Panc1 (cell line): ENCODE measurements at regions of chr20 and their contacts with region 1.

Region 1: GRCh38 chr20:43579861-43580793 is 10.6 kb upstream of the IFT52 start:
- DNase-seq: no peak
- ATAC-seq: no peak
- H3K4me3 ChIP-seq: no peak overlapping the region
- H3K27ac ChIP-seq: no peak overlapping the region
- H3K4me1 ChIP-seq: no peaks in the 10 kb centered on the region
- H3K27me3 ChIP-seq: no peaks in the 10 kb centered on the region
- CTCF ChIP-seq: no peak

Region 2: DNA sequence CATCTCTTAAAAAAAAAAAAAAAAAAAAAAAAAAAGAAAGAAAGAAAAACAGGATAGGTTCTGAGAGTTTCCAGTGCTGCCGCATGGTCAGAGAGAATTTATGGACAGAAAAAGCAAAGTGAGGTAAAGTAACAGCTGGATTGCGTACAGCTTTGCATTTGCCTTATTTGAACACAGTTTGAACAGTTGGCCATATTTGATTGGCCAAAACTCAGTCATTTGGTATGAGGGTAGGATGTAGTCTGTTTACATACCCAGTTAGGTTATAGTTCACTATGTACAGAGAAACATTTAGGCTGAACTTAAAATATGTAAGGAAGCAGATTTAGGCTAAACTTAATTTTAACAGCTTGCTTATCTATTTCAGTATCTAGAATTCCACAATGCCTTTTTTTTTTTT is 90.1 kb before region 1 on chr20:
- CTCF ChIA-PET with region 1: no interaction called
- POLR2A ChIA-PET with region 1: interaction called, 12 read pairs
- in situ Hi-C with region 1: no loop called
- intact Hi-C with region 1: no loop called
- DNase-seq: no peak
- ATAC-seq: no peak
- H3K4me3 ChIP-seq: no peak overlapping the region
- H3K27ac ChIP-seq: no peak overlapping the region
- H3K4me1 ChIP-seq: no peaks in the 10 kb centered on the region
- H3K27me3 ChIP-seq: no peaks in the 10 kb centered on the region
- CTCF ChIP-seq: no peak